CD8-positive, alpha-beta memory T cell (primary cell): ENCODE measurements at regions of chr1 and their contacts with region 1.

Region 1: GRCh38 chr1:12551584-12551983 is 66.4 kb downstream of the DHRS3 start:
- DNase-seq: no peak
- H3K4me3 ChIP-seq: no peak overlapping the region
- H3K4me3 Mint-ChIP-seq: no peak overlapping the region
- H3K27ac ChIP-seq: no peak overlapping the region
- H3K27ac Mint-ChIP-seq: peak overlapping the region in 1 of 8 donors; percentile 32
- H3K4me1 ChIP-seq: no peaks in the 10 kb centered on the region
- H3K4me1 Mint-ChIP-seq: no peaks in the 10 kb centered on the region
- H3K27me3 ChIP-seq: no peaks in the 10 kb centered on the region
- H3K27me3 Mint-ChIP-seq: peaks cover 0 to 2% of the 10 kb centered on the region in 2 donors

Region 2: GRCh38 chr1:12475947-12476346 is 75.6 kb before region 1 on chr1:
- CTCF ChIA-PET with region 1: no interaction called
- POLR2A ChIA-PET with region 1: interaction called, 13 read pairs
- DNase-seq: peak in 1 of 5 donors; percentile 22
- H3K4me3 ChIP-seq: no peak overlapping the region
- H3K4me3 Mint-ChIP-seq: peak overlapping the region in 5 of 7 donors; percentile 2 to 67 (median 40)
- H3K27ac ChIP-seq: peak overlapping the region; percentile 32
- H3K27ac Mint-ChIP-seq: peak overlapping the region; percentile 83 to 96 (median 85)
- H3K4me1 ChIP-seq: peaks cover 100% of the 10 kb centered on the region
- H3K4me1 Mint-ChIP-seq: peaks cover 95 to 98% (median 98%) of the 10 kb centered on the region in 3 donors
- H3K27me3 ChIP-seq: no peaks in the 10 kb centered on the region
- H3K27me3 Mint-ChIP-seq: no peaks in the 10 kb centered on the region

Region 3: GRCh38 chr1:12739613-12740012 is 188.0 kb after region 1 on chr1:
- CTCF ChIA-PET with region 1: no interaction called
- POLR2A ChIA-PET with region 1: no interaction called
- DNase-seq: no peak
- H3K4me3 ChIP-seq: no peak overlapping the region
- H3K4me3 Mint-ChIP-seq: no peak overlapping the region
- H3K27ac ChIP-seq: no peak overlapping the region
- H3K27ac Mint-ChIP-seq: no peak overlapping the region
- H3K4me1 ChIP-seq: no peaks in the 10 kb centered on the region
- H3K4me1 Mint-ChIP-seq: no peaks in the 10 kb centered on the region
- H3K27me3 ChIP-seq: peaks cover 7% of the 10 kb centered on the region
- H3K27me3 Mint-ChIP-seq: peaks cover 16 to 82% of the 10 kb centered on the region in 2 donors